A673 (cell line): ENCODE measurements at regions of chr12 and their contacts with region 1.

Region 1: GRCh38 chr12:50453874-50454273 is 50.9 kb upstream of the DIP2B start:
- DNase-seq: peak; percentile 28
- H3K4me3 ChIP-seq: no peak overlapping the region
- H3K27ac ChIP-seq: no peak overlapping the region
- H3K4me1 ChIP-seq: peaks cover 5% of the 10 kb centered on the region
- H3K27me3 ChIP-seq: no peaks in the 10 kb centered on the region
- CTCF ChIP-seq: no peak

Region 2: DNA sequence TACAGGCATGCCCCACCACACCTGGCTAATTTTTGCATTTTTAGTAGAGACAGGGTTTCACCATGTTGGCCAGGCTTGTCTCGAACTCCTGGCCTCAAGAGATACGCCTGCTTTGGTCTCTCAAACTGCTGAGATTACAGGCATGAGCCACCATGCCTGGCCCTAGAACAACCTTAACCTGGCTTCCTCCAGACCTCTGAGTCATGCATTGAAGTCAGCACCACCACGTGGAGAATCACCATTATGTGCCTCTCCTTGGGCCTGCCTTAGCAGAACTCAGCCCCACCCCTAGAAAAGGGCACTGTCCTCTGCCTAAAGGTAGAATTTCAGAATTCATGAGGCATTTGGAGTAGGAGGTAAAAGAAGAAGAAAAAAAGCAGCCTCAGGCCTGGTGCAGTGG is 219.5 kb before region 1 on chr12:
- CTCF ChIA-PET with region 1: no interaction called
- POLR2A ChIA-PET with region 1: interaction called, 19 read pairs
- intact Hi-C with region 1: no loop called
- DNase-seq: no peak
- H3K4me3 ChIP-seq: no peak overlapping the region
- H3K27ac ChIP-seq: no peak overlapping the region
- H3K4me1 ChIP-seq: no peaks in the 10 kb centered on the region
- H3K27me3 ChIP-seq: no peaks in the 10 kb centered on the region
- CTCF ChIP-seq: no peak